Activated CD4-positive, alpha-beta T cell treated with anti-CD3 and anti-CD28 coated beads, Interleukin-2, amount 10 ng/mL, durations not matched to agents 24 days and 14 days (primary cell): ENCODE measurements at regions of chr16 and their contacts with region 1.

Region 1: GRCh38 chr16:1705688-1706385 is at the start of gene MAPK8IP3:
- DNase-seq: peak; percentile 100
- H3K4me3 Mint-ChIP-seq: peak within 1 kb of the TSS; percentile 99
- H3K27ac Mint-ChIP-seq: peak within 1 kb of the TSS; percentile 97
- H3K4me1 Mint-ChIP-seq: peaks cover 27% of the 10 kb centered on the region
- H3K27me3 Mint-ChIP-seq: no peaks in the 10 kb centered on the region
- total RNA-seq, gene MAPK8IP3: 78.2 and 80.2 TPM in 2 replicates

Region 2: GRCh38 chr16:1342526-1343427 is 363.1 kb before region 1 on chr16:
- intact Hi-C with region 1: loop called (anchors 2 kb)
- DNase-seq: peak; percentile 97
- H3K4me3 Mint-ChIP-seq: peak overlapping the region; percentile 78
- H3K27ac Mint-ChIP-seq: peak overlapping the region; percentile 60
- H3K4me1 Mint-ChIP-seq: peaks cover 11% of the 10 kb centered on the region
- H3K27me3 Mint-ChIP-seq: no peaks in the 10 kb centered on the region

Region 3: DNA sequence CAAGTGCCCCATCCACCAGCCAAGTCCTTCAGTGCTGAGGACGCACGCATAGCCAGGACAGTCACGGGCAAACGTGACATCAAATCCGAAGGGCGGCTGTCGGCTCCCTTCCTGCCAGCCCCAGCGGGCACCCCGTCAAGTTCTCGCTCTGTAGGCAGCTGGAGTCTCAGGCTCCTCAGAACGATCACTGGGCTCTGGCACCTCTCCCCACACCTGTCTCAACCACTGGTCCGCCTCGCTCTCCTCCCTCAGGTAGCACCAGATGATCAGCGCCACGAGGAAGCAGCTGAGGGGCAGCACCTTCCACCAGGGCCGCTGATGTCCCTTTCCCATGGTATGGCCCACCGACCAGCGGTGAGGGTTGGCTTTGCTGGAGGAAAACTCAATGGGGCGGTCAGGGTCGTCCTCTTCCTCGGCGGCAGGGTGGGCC is 285.7 kb before region 1 on chr16:
- intact Hi-C with region 1: loop called (anchors 1 kb)
- DNase-seq: no peak
- H3K4me3 Mint-ChIP-seq: peak overlapping the region; percentile 81
- H3K27ac Mint-ChIP-seq: peak overlapping the region; percentile 97
- H3K4me1 Mint-ChIP-seq: peaks cover 18% of the 10 kb centered on the region
- H3K27me3 Mint-ChIP-seq: peaks cover 3% of the 10 kb centered on the region

Region 4: DNA sequence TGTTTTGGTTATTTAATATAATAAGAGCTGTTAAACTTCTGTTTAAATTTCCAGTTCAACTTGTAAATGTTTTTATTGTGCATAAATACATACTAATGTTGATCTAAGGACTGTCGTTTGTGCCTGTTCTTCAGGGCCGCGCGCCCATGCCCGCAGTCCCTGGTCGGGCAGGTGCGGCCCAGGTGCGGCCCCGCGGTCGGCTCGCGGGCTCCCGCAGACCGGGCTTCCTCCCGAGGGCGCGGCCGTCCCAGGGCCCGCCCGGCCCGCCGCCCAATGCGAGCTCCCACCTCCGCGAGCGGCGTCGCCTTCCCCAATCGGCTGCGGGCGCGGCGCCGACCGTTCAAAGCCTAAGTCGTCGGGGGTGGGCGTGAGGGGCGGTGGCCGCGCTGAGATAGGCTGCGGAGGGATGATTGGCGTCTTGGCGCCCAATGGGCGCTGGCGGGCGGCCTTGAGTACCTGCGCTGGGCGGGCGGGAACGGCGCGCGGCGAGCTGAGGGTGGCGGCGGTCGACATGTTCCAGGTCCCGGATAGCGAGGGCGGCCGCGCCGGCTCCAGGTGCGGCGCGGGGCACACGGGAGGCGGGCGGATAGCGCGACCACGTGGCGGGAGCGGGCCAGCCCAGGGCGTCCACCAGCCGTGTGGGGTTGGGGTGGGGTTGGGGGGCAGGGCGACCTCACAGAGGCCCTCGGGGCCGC is 27.9 kb before region 1 on chr16 and contains the start of gene JPT2:
- intact Hi-C with region 1: loop called (anchors 1 kb)
- DNase-seq: peak; percentile 99
- H3K4me3 Mint-ChIP-seq: peak within 1 kb of the TSS; percentile 95
- H3K27ac Mint-ChIP-seq: peak within 1 kb of the TSS; percentile 93
- H3K4me1 Mint-ChIP-seq: peaks cover 34% of the 10 kb centered on the region
- H3K27me3 Mint-ChIP-seq: no peaks in the 10 kb centered on the region
- total RNA-seq, gene JPT2: 119 and 120 TPM in 2 replicates

Region 5: GRCh38 chr16:1772736-1773584 is 67.1 kb after region 1 on chr16 and contains the starts of genes EME2 and MRPS34:
- intact Hi-C with region 1: loop called (anchors 5 kb)
- DNase-seq: peak; percentile 96
- H3K4me3 Mint-ChIP-seq: peak within 1 kb of the TSS; percentile 93
- H3K27ac Mint-ChIP-seq: peak within 1 kb of the TSS; percentile 95
- H3K4me1 Mint-ChIP-seq: peaks cover 10% of the 10 kb centered on the region
- H3K27me3 Mint-ChIP-seq: no peaks in the 10 kb centered on the region
- total RNA-seq, gene EME2: 28.2 and 30.0 TPM in 2 replicates
- total RNA-seq, gene MRPS34: 201 and 207 TPM in 2 replicates